Heart right ventricle (tissue), 16 donors: ENCODE measurements at regions of chr6 and their contacts with region 1.

Region 1: DNA sequence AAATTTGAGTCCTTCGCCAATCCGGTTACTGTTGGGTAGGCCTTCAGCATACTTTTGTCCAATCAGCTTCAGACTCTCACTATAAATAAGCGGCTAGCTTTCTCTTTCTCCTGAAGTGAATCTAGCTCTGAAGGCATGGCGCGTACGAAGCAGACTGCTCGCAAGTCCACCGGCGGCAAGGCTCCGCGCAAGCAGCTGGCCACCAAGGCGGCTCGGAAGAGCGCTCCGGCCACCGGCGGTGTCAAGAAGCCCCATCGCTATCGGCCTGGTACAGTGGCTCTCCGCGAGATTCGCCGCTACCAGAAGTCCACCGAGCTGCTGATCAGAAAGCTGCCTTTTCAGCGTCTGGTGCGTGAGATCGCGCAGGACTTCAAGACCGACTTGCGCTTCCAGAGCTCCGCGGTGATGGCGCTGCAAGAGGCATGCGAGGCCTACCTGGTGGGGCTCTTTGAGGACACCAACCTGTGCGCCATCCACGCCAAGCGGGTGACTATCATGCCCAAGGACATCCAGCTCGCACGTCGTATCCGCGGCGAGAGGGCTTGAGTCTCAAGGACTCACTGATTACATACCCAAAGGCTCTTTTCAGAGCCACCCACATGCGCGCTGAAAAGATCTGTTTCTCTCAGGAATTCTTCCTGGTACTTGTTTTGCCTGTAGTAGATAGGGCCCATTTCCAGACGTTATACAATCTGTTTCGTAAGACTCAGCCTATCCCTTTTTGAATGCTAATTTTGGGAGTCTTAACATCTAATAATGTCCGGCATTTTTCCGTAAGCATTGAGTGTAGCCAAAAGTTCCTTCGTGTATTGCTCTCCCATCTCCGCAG is 102.0 kb downstream of the OR2B2 start:
- DNase-seq: peak; percentile 54 to 78
- ATAC-seq: peak; percentile 81 to 86 (median 82)
- H3K4me3 ChIP-seq: peak overlapping the region; percentile 11 to 69 (median 61)
- H3K27ac ChIP-seq: peak overlapping the region in 9 of 10 donors; percentile 34 to 92 (median 75)
- H3K4me1 ChIP-seq: peaks cover 0 to 53% (median 9%) of the 10 kb centered on the region in 9 donors
- H3K27me3 ChIP-seq: peaks cover 6 to 95% (median 47%) of the 10 kb centered on the region in 7 donors
- CTCF ChIP-seq: peak in 1 of 9 donors; percentile 24

Region 2: GRCh38 chr6:27871924-27872638 is 61.9 kb after region 1 on chr6:
- intact Hi-C with region 1: loop called in 1 of 10 experiments (anchors 5 kb)
- DNase-seq: peak; percentile 36 to 78
- ATAC-seq: peak; percentile 78 to 93 (median 88)
- H3K4me3 ChIP-seq: peak overlapping the region; percentile 40 to 70 (median 56)
- H3K27ac ChIP-seq: peak overlapping the region in 9 of 10 donors; percentile 15 to 94 (median 60)
- H3K4me1 ChIP-seq: peaks cover 4 to 45% (median 17%) of the 10 kb centered on the region in 9 donors
- H3K27me3 ChIP-seq: peaks cover 10 to 86% (median 75%) of the 10 kb centered on the region in 7 donors
- CTCF ChIP-seq: peak in 1 of 9 donors; percentile 27

Region 3: DNA sequence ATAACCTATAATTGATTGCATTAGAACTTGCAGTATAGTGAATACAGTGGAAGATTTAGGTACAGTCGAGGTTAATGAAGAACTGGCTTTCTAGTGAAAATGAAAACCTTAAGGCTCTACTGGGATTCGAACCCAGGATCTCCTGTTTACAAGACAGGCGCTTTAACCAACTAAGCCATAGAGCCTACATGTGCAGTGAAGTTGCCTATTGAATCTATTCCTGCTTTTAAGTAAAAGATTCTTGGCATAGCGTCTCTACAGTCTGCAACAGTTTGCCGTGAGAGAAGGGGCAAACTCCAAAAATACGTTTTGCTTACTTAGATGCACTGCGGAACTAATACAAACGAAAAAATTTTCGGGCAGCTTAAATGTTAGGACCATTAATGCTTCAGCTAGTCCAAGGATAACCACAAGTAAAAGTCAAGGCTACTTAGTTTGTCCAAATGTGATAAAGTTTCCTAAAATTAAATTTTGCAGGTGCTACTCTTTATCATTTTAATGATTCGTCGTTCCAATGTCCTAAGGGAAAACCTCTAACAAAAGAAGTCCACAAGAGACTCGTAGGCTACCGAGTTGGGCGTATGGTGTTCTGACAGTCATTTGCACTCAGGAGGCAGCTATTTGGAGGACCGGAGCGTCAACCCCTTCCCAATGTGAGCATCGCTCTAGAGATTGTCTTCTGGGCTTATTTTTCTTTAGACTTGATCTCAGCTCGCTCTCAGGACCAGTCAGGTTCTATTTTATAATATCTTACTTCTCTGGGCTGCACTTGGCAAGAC is 664.5 kb after region 1 on chr6:
- intact Hi-C with region 1: no loop called
- DNase-seq: no peak
- ATAC-seq: peak in 1 of 8 donors; percentile 55
- H3K4me3 ChIP-seq: peak overlapping the region in 2 of 10 donors; percentile 7 to 9
- H3K27ac ChIP-seq: no peak overlapping the region
- H3K4me1 ChIP-seq: no peaks in the 10 kb centered on the region
- H3K27me3 ChIP-seq: peaks cover 0 to 83% (median 63%) of the 10 kb centered on the region in 7 donors
- CTCF ChIP-seq: no peak

Region 4: DNA sequence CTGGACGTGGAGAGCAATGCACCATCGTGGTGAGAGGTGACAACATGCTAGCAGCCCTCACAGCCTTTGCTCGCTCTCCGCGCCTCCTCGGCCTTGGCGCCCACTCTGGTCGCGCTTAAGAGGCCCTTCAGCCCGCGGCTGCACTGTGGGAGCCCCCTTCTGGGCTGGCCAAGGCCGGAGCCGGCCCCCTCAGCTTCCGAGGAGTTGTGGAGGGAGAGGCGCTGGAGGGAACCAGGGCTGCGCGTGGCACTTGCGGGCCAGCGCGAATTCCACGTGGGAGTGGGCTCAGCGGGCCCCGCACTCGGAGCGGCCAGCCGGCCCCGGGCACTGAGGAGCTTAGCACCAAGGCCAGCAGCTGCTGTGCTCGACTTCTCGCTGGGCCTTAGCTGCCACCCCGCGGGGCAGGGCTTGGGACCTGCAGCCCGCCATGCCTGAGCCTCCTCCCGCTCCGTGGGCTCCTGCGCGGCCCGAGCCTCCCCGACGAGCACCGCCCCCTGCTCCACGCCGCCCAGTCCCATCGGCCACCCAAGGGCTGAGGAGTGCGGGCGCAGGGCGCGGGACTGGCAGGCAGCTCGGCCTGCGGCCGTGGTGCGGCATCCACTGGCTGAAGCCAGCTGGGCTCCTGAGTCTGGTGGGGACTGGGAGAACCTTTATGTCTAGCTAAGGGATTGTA is 701.6 kb after region 1 on chr6:
- intact Hi-C with region 1: no loop called
- DNase-seq: no peak
- ATAC-seq: no peak
- H3K4me3 ChIP-seq: no peak overlapping the region
- H3K27ac ChIP-seq: no peak overlapping the region
- H3K4me1 ChIP-seq: no peaks in the 10 kb centered on the region
- H3K27me3 ChIP-seq: peaks cover 0 to 41% (median 9%) of the 10 kb centered on the region in 7 donors
- CTCF ChIP-seq: no peak

Region 5: GRCh38 chr6:29200767-29201662 is 1390.9 kb after region 1 on chr6:
- intact Hi-C with region 1: loop called in 1 of 10 experiments (anchors 5 kb)
- DNase-seq: no peak
- ATAC-seq: peak in 1 of 8 donors; percentile 30
- H3K4me3 ChIP-seq: no peak overlapping the region
- H3K27ac ChIP-seq: no peak overlapping the region
- H3K4me1 ChIP-seq: no peaks in the 10 kb centered on the region
- H3K27me3 ChIP-seq: peaks cover 0 to 3% (median 0%) of the 10 kb centered on the region in 7 donors
- CTCF ChIP-seq: no peak